WTC11 (cell line): ENCODE measurements at regions of chr13 and their contacts with region 1.

Region 1: GRCh38 chr13:27953676-27954405 is 15.3 kb downstream of the CDX2 start:
- DNase-seq: peak; percentile 91
- ATAC-seq: peak; percentile 95
- H3K4me3 Mint-ChIP-seq: peak overlapping the region; percentile 74
- H3K27ac Mint-ChIP-seq: no peak overlapping the region
- H3K4me1 Mint-ChIP-seq: peaks cover 6% of the 10 kb centered on the region
- H3K27me3 Mint-ChIP-seq: peaks cover 99% of the 10 kb centered on the region
- CTCF ChIP-seq: peak; percentile 90

Region 2: DNA sequence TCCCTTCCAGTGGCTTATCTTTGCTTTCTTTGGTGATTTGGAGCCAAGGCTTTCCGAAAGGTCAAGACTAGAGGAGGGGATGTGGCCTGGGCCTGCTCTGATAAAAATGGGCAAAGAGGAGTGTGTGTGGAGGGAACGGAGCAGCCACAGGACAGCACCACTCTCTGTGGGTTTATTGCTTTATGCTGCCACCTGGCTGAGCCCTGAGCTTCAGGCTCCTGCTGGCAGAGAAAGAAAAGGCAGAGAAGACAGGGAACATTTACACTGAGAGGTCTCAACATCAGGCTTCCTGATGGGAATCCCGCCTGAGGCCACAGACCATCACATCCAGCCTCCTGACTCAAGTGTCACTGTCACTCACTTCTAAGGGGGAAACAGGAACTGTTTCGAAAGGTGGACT is 170.7 kb before region 1 on chr13:
- CTCF ChIA-PET with region 1: interaction called, 12 read pairs
- POLR2A ChIA-PET with region 1: no interaction called
- DNase-seq: peak; percentile 38
- ATAC-seq: peak; percentile 96
- H3K4me3 Mint-ChIP-seq: no peak overlapping the region
- H3K27ac Mint-ChIP-seq: no peak overlapping the region
- H3K4me1 Mint-ChIP-seq: peaks cover 16% of the 10 kb centered on the region
- H3K27me3 Mint-ChIP-seq: peaks cover 82% of the 10 kb centered on the region
- CTCF ChIP-seq: no peak

Region 3: DNA sequence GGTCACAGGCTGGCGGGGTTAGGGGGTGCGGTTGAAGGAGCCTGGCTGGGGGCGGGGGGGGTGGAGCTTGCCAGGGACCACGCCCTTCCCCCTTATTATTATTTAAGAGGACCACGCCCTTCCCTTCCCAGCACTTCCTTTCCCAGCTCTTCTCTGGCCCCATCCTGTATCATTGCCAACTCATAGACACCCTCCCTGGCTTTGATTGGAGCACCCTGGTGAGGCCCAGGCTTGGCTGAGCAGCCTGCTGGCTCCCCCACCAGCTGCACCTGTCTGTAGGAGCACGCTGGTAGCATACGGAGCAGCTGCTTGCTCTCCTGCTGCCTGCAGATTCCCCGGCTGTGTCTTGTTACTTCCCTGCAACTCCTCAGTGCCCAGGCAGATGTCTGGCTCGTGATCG is 96.6 kb before region 1 on chr13:
- CTCF ChIA-PET with region 1: interaction called, 19 read pairs
- POLR2A ChIA-PET with region 1: no interaction called
- DNase-seq: no peak
- ATAC-seq: peak; percentile 44
- H3K4me3 Mint-ChIP-seq: no peak overlapping the region
- H3K27ac Mint-ChIP-seq: no peak overlapping the region
- H3K4me1 Mint-ChIP-seq: peaks cover 24% of the 10 kb centered on the region
- H3K27me3 Mint-ChIP-seq: peaks cover 6% of the 10 kb centered on the region
- CTCF ChIP-seq: no peak

Region 4: DNA sequence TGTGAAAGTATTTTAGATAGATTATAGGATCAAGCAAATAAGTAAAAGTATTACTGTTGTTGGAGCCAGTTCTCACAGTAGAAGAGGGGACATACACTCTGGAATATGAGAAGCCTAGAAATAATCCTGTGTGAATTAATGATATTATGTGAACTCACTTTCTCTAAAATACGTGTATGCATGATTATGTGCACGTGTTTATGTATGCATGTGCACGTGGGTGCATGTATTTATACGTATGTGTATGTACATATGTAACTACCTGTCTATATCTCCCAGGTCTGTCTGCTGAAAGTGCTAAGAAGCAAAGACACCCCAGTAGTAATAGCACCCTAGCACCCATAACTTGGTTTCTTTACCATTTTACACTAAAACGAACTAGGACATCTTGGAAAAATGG is 75.6 kb before region 1 on chr13:
- CTCF ChIA-PET with region 1: interaction called, 13 read pairs
- POLR2A ChIA-PET with region 1: no interaction called
- DNase-seq: no peak
- ATAC-seq: no peak
- H3K4me3 Mint-ChIP-seq: no peak overlapping the region
- H3K27ac Mint-ChIP-seq: no peak overlapping the region
- H3K4me1 Mint-ChIP-seq: peaks cover 2% of the 10 kb centered on the region; the same call in 1 of the 2 replicates
- H3K27me3 Mint-ChIP-seq: no peaks in the 10 kb centered on the region; the same call in 1 of the 2 replicates
- CTCF ChIP-seq: no peak

Region 5: DNA sequence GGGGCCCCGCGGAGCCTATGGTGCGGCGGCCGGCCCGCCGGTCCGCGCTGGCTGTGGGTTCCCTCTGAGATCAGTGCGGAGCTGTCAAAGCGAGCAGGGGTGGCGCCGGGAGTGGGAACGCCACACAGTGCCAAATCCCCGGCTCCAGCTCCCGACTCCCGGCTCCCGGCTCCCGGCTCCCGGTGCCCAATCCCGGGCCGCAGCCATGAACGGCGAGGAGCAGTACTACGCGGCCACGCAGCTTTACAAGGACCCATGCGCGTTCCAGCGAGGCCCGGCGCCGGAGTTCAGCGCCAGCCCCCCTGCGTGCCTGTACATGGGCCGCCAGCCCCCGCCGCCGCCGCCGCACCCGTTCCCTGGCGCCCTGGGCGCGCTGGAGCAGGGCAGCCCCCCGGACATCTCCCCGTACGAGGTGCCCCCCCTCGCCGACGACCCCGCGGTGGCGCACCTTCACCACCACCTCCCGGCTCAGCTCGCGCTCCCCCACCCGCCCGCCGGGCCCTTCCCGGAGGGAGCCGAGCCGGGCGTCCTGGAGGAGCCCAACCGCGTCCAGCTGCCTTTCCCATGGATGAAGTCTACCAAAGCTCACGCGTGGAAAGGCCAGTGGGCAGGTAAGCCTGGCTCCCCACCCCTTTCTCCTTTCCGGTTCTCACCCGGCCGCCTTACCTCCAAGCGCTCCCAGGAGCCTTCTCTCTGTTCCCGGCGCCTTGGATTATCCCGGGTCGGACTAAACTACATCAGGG is 33.7 kb before region 1 on chr13 and contains the start of gene PDX1:
- CTCF ChIA-PET with region 1: interaction called, 35 read pairs
- POLR2A ChIA-PET with region 1: interaction called, 3 read pairs
- DNase-seq: peak; percentile 77
- ATAC-seq: peak; percentile 73
- H3K4me3 Mint-ChIP-seq: peak within 1 kb of the TSS; percentile 61
- H3K27ac Mint-ChIP-seq: no peak within 1 kb of the TSS
- H3K4me1 Mint-ChIP-seq: peaks cover 53% of the 10 kb centered on the region
- H3K27me3 Mint-ChIP-seq: peaks cover 99% of the 10 kb centered on the region
- CTCF ChIP-seq: no peak
- total RNA-seq, gene PDX1: not detected in 3 replicates

Region 6: GRCh38 chr13:27933580-27934328 is 20.1 kb before region 1 on chr13:
- CTCF ChIA-PET with region 1: interaction called, 39 read pairs
- POLR2A ChIA-PET with region 1: interaction called, 5 read pairs
- DNase-seq: no peak
- ATAC-seq: no peak
- H3K4me3 Mint-ChIP-seq: no peak overlapping the region
- H3K27ac Mint-ChIP-seq: no peak overlapping the region
- H3K4me1 Mint-ChIP-seq: peaks cover 11% of the 10 kb centered on the region
- H3K27me3 Mint-ChIP-seq: peaks cover 66% of the 10 kb centered on the region
- CTCF ChIP-seq: no peak

Region 7: GRCh38 chr13:27977476-27978300 is 23.8 kb after region 1 on chr13:
- CTCF ChIA-PET with region 1: interaction called, 24 read pairs
- POLR2A ChIA-PET with region 1: interaction called, 5 read pairs
- DNase-seq: peak; percentile 69
- ATAC-seq: peak; percentile 31
- H3K4me3 Mint-ChIP-seq: peak overlapping the region; percentile 61
- H3K27ac Mint-ChIP-seq: no peak overlapping the region
- H3K4me1 Mint-ChIP-seq: peaks cover 46% of the 10 kb centered on the region
- H3K27me3 Mint-ChIP-seq: peaks cover 100% of the 10 kb centered on the region
- CTCF ChIP-seq: no peak

Region 8: DNA sequence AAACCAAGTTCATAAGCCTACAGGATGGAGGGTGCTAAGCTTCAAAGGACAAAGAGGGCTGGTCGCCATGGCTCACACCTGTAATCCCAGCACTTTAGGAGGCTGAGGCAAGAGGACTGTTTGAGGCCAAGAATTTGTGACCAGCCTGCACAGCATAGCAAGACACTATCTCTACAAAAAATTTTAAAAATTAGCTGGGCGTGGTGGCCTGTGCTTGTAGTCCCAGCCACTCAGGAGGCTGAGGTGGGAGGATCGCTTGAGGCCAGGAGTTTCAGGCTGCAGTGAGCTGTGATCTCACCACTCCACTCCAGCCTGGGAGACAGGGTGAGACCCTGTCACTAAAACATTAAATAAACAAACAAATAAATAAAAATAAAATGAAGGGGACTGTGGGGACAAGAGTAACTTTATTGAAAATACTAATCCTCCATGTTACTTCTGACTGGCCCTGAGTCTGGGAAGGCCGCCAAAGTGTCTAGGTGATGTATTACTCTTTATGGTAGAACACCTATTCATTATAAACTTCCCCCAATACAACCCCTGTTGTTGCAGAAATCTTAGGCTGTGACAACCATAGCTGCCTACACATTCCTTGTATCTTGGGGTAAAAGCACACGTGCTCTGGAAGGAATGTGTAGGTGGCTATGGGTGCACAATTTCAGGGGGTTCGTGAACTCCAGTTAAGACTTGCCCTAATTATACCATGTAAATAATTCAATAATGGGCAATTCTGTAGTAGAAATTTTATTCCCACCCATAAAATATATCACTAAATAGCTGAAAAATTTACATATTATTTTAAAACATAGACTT is 49.3 kb after region 1 on chr13:
- CTCF ChIA-PET with region 1: no interaction called
- POLR2A ChIA-PET with region 1: no interaction called
- DNase-seq: no peak
- ATAC-seq: no peak
- H3K4me3 Mint-ChIP-seq: no peak overlapping the region
- H3K27ac Mint-ChIP-seq: no peak overlapping the region
- H3K4me1 Mint-ChIP-seq: peaks cover 7% of the 10 kb centered on the region
- H3K27me3 Mint-ChIP-seq: no peaks in the 10 kb centered on the region
- CTCF ChIP-seq: no peak

Region 9: GRCh38 chr13:28100150-28101121 is 146.6 kb after region 1 on chr13 and contains the start of gene FLT3:
- CTCF ChIA-PET with region 1: no interaction called
- POLR2A ChIA-PET with region 1: no interaction called
- DNase-seq: peak; percentile 73
- ATAC-seq: peak; percentile 88
- H3K4me3 Mint-ChIP-seq: peak within 1 kb of the TSS; percentile 67
- H3K27ac Mint-ChIP-seq: no peak within 1 kb of the TSS
- H3K4me1 Mint-ChIP-seq: peaks cover 9% of the 10 kb centered on the region
- H3K27me3 Mint-ChIP-seq: peaks cover 80% of the 10 kb centered on the region
- CTCF ChIP-seq: no peak
- total RNA-seq, gene FLT3: 0.15 to 0.34 TPM (median 0.16 TPM) in 3 replicates

Region 10: GRCh38 chr13:28313579-28313978 is 359.7 kb after region 1 on chr13:
- CTCF ChIA-PET with region 1: no interaction called
- POLR2A ChIA-PET with region 1: no interaction called
- DNase-seq: peak; percentile 36
- ATAC-seq: peak; percentile 60
- H3K4me3 Mint-ChIP-seq: no peak overlapping the region
- H3K27ac Mint-ChIP-seq: 0 out of 2 replicates have a peak overlapping the region, but pooled peaks have one; percentile 50
- H3K4me1 Mint-ChIP-seq: peaks cover 5% of the 10 kb centered on the region
- H3K27me3 Mint-ChIP-seq: no peaks in the 10 kb centered on the region
- CTCF ChIP-seq: no peak